ENCODE measurements at regions of chr5 and their contacts with region 1.

Region 1: GRCh38 chr5:94849821-94850736 is 231.6 kb downstream of the SLF1 start:
- DNase-seq: peak; percentile 39
- H3K4me3 ChIP-seq: no peak overlapping the region
- H3K27ac ChIP-seq: no peak overlapping the region
- H3K4me1 ChIP-seq: peaks cover 0 to 2% of the 10 kb centered on the region in 2 experiments; a peak in 2 of 4 replicates
- H3K27me3 ChIP-seq: no peaks in the 10 kb centered on the region
- CTCF ChIP-seq: peak; percentile 77
- EP300 ChIP-seq: peak in 1 of 2 experiments; percentile 17; a peak in 1 of 4 replicates
- RAD21 ChIP-seq: peak; percentile 97

Region 2: DNA sequence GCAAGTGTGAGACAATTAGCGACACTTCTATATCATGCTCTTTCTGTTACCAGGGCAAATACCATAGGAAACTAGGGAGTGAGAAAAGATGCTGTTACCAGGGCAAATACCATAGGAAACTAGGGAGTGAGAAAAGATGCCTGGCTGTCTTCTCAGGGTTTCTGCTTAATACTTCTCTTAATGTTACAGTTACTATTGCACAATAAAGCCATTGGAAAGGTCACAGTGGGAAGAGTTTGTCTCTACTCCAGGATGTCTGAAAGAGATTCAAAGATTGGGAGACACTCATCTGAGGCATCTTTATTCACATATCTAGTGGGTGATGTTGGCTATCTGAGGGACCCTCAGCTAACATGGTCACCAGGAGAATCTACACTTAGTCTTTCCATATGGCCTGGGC is 677.0 kb before region 1 on chr5:
- CTCF ChIA-PET with region 1: no interaction called
- POLR2A ChIA-PET with region 1: no interaction called
- DNase-seq: no peak
- H3K4me3 ChIP-seq: no peak overlapping the region
- H3K27ac ChIP-seq: no peak overlapping the region
- H3K4me1 ChIP-seq: peaks cover 0 to 4% of the 10 kb centered on the region in 2 experiments; a peak in 2 of 4 replicates
- H3K27me3 ChIP-seq: no peaks in the 10 kb centered on the region
- CTCF ChIP-seq: no peak
- EP300 ChIP-seq: no peak
- RAD21 ChIP-seq: no peak

Region 3: DNA sequence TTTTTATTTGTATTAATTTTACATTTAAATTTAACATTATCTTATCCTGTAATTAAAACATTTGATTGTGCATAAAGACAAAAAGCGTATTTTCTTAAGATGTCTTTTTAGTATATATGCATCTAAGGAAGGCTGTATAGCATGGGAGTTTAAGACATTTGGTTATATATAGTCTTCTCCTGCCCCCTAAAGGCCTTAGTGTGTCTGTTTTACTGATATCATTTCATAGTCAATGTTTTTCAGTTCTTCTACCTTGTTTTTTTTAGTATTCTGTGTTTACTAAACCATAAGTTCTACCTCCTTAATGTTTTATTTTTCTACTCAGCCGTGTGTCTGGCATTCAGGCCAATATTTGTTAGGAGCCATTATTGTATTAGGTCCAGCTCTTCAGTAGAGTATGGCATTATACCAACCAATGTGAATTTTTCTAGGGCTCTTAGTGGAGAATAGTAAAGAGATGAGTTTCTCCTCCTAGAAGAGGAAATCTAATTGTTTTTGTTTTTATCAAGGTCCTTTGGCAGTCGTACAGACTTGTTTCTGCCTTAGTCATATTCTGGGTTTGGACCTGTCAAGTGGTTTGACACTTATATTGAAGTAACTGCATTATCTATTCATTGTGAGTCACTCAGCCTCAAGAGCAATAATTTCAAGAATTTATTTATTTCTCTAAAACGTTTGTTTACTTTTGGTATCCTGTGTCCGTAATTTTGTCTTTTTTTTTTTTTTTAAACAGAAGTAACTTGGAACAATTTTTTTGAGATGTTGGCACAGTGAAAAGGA is 156.8 kb before region 1 on chr5:
- CTCF ChIA-PET with region 1: interaction called, 15 read pairs
- POLR2A ChIA-PET with region 1: no interaction called
- DNase-seq: peak; percentile 16
- H3K4me3 ChIP-seq: no peak overlapping the region; a peak in 1 of 4 replicates
- H3K27ac ChIP-seq: peak overlapping the region; percentile 43 to 72
- H3K4me1 ChIP-seq: peaks cover 11 to 18% of the 10 kb centered on the region in 2 experiments
- H3K27me3 ChIP-seq: no peaks in the 10 kb centered on the region
- CTCF ChIP-seq: peak; percentile 72
- EP300 ChIP-seq: peak; percentile 38 to 78; a peak in 2 of 4 replicates
- RAD21 ChIP-seq: peak; percentile 74

Region 4: GRCh38 chr5:94740286-94740685 is 109.8 kb before region 1 on chr5:
- CTCF ChIA-PET with region 1: interaction called, 12 read pairs
- POLR2A ChIA-PET with region 1: no interaction called
- DNase-seq: no peak
- H3K4me3 ChIP-seq: no peak overlapping the region
- H3K27ac ChIP-seq: no peak overlapping the region
- H3K4me1 ChIP-seq: no peaks in the 10 kb centered on the region
- H3K27me3 ChIP-seq: no peaks in the 10 kb centered on the region
- CTCF ChIP-seq: no peak
- EP300 ChIP-seq: no peak
- RAD21 ChIP-seq: no peak

Region 5: DNA sequence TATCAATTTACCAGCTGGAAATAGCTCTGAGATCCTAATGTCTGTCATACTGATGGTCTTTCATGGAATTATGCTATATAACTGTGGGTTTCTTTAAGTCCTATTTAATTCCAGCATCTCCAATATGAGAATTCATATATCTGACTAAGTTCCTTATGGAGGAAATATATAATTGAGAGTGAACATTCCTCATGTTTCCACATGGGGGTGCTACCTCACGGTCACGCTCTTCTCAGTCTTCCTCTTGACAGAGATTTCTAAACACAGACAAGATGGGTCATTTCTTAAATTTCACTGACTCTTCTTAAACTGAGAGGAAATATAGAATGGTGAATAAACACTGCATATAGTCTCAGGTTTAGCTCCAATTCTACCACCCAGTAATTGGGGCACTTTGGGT is 19.6 kb before region 1 on chr5:
- CTCF ChIA-PET with region 1: interaction called, 13 read pairs
- POLR2A ChIA-PET with region 1: no interaction called
- DNase-seq: peak; percentile 11
- H3K4me3 ChIP-seq: no peak overlapping the region
- H3K27ac ChIP-seq: no peak overlapping the region
- H3K4me1 ChIP-seq: no peaks in the 10 kb centered on the region
- H3K27me3 ChIP-seq: no peaks in the 10 kb centered on the region
- CTCF ChIP-seq: peak; percentile 55
- EP300 ChIP-seq: no peak
- RAD21 ChIP-seq: peak; percentile 29; the same call in 1 of the 2 replicates

Region 6: GRCh38 chr5:94893412-94894135 is 43.5 kb after region 1 on chr5:
- CTCF ChIA-PET with region 1: interaction called, 21 read pairs
- POLR2A ChIA-PET with region 1: no interaction called
- DNase-seq: peak; percentile 47
- H3K4me3 ChIP-seq: no peak overlapping the region
- H3K27ac ChIP-seq: peak overlapping the region in 1 of 2 experiments; percentile 75; a peak in 2 of 4 replicates
- H3K4me1 ChIP-seq: peaks cover 0 to 8% of the 10 kb centered on the region in 2 experiments; a peak in 2 of 4 replicates
- H3K27me3 ChIP-seq: no peaks in the 10 kb centered on the region
- CTCF ChIP-seq: peak; percentile 55
- EP300 ChIP-seq: peak in 1 of 2 experiments; percentile 46; a peak in 1 of 4 replicates
- RAD21 ChIP-seq: peak; percentile 94

Measured in SK-N-SH (cell line).